OCI-LY7 (cell line): ENCODE measurements at regions of chrX and their contacts with region 1.

Region 1: GRCh38 chrX:373637-374471 is 12.9 kb downstream of the PPP2R3B start:
- DNase-seq: peak; percentile 78
- H3K4me3 ChIP-seq: peak overlapping the region; percentile 82
- H3K27ac ChIP-seq: peak overlapping the region; percentile 89
- H3K4me1 ChIP-seq: peaks cover 62% of the 10 kb centered on the region
- CTCF ChIP-seq: peak; percentile 30; the same call in 1 of the 2 replicates

Region 2: GRCh38 chrX:283115-283845 is 90.6 kb before region 1 on chrX:
- CTCF ChIA-PET with region 1: no interaction called
- POLR2A ChIA-PET with region 1: no interaction called
- intact Hi-C with region 1: loop called (anchors 2 kb)
- DNase-seq: peak; percentile 98
- H3K4me3 ChIP-seq: peak overlapping the region; percentile 90
- H3K27ac ChIP-seq: peak overlapping the region; percentile 94
- H3K4me1 ChIP-seq: peaks cover 22% of the 10 kb centered on the region
- CTCF ChIP-seq: no peak

Region 3: DNA sequence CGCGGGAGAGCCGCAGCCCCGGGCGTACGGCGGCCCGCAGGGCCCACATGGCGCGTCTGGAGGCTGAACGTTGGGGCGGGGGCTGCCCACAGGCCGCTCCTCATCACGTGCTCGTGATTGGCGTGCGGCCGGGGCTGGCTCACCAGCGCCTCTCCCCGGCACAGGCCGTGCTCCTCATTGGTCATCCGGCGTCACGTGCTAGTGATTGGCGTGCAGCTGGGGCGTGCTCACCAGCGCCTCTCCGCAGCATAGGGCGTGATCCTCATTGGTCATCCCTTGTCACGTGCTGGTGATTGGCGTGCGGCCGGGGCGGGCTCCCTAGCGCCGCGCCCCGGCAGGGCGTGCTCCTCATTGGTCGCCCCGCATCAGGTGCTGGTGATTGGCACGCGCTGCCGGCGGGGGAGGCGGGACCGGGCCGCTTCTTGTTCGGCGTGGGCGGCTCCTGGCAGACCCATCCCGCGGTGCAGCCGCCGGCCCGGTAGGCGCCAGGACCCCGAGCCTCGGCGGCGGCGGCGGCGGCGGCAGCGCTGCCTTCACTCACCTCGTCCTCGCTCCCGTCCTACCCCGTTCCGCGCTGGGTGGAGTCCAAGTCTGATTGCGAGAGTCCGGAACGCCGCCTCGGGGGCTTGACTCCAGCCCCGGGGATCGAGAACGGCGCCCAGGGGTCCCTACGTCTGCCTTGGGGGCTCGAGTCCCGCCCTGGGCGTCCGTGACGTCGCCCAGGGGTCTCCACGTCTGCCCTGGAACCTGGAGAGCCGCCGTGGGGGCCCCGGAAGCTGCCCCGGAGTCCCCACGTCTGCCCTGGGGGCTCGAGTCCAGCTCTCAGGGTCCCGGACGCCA is 54.9 kb before region 1 on chrX and contains the start of gene GTPBP6:
- CTCF ChIA-PET with region 1: no interaction called
- POLR2A ChIA-PET with region 1: no interaction called
- intact Hi-C with region 1: loop called (anchors 1 kb)
- DNase-seq: peak; percentile 100
- H3K4me3 ChIP-seq: peak within 1 kb of the TSS; percentile 93
- H3K27ac ChIP-seq: peak within 1 kb of the TSS; percentile 76
- H3K4me1 ChIP-seq: peaks cover 19% of the 10 kb centered on the region
- CTCF ChIP-seq: no peak
- total RNA-seq, gene GTPBP6: 36.3 and 40.4 TPM in 2 replicates

Region 4: DNA sequence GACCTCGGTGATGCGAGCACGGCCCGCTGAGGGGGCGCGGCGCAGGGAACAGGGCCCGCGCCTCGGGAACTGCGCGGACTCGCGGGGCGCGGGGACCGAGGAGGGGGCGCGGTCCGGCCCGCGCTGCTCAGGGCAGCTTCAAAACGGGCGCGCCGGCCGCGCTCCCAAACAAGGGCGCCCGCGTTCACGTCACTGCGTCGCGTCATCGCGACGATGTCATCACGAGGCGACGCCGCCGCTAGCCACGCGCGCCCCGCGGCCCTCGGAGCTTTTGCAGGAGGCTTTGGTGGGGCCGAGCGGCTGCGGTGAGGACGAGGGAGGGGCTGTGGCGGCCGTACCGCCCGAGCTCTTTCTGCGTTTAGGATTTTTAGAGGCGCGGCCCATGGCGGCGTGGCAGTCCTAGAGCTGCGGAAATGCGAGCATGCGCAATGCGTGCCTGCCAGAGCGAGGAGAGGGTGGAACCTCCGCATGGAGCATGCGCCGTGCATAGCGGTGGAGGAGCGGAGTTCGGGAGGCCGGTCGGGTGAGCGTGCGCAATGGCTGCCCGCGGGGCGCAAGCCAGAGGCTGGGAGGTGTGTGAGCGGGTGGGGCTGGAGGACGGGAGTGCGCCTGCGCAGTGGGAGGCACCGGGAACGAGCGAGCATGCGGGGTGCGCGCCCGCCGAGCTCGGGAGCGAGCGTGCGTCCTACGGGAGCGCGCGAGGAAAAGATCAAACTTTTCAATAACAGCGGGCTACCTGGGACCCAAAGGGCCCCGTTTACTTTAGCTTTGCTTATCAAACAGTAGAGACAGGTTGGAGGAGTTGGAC is 13.1 kb after region 1 on chrX and contains the start of gene PPP2R3B:
- CTCF ChIA-PET with region 1: no interaction called
- POLR2A ChIA-PET with region 1: no interaction called
- intact Hi-C with region 1: loop called (anchors 1 kb)
- DNase-seq: peak; percentile 98
- H3K4me3 ChIP-seq: peak within 1 kb of the TSS; percentile 74
- H3K27ac ChIP-seq: peak within 1 kb of the TSS; percentile 75
- H3K4me1 ChIP-seq: peaks cover 26% of the 10 kb centered on the region
- CTCF ChIP-seq: no peak
- total RNA-seq, gene PPP2R3B: 311 and 342 TPM in 2 replicates

Region 5: GRCh38 chrX:623599-624315 is 249.9 kb after region 1 on chrX:
- CTCF ChIA-PET with region 1: no interaction called
- POLR2A ChIA-PET with region 1: no interaction called
- intact Hi-C with region 1: no loop called
- DNase-seq: no peak
- H3K4me3 ChIP-seq: no peak overlapping the region
- H3K27ac ChIP-seq: no peak overlapping the region
- H3K4me1 ChIP-seq: no peaks in the 10 kb centered on the region
- CTCF ChIP-seq: no peak

Region 6: DNA sequence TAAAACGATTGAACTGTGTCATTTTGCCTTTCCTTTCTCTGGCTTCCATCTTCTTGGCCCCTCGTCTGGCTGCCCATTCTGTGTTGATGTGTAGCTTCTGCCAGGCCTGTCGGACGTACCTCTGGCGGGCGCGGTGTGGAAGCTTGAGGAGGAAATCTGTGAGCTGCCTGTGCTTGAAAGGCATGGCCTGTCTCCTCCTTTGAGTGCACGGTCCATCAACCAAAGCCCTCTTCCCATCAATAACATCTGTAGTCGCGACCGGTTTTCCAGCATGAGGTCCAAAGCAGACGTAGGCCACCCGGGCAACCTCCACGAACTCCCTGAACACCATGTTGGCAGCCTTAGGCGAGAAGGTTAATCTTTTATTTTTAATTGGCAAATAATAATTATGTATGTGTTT is 635.9 kb after region 1 on chrX:
- CTCF ChIA-PET with region 1: no interaction called
- POLR2A ChIA-PET with region 1: no interaction called
- intact Hi-C with region 1: loop called (anchors 5 kb)
- DNase-seq: no peak
- H3K4me3 ChIP-seq: no peak overlapping the region
- H3K27ac ChIP-seq: peak overlapping the region; percentile 96
- H3K4me1 ChIP-seq: peaks cover 43% of the 10 kb centered on the region
- CTCF ChIP-seq: no peak